GM12878 (cell line): ENCODE measurements at regions of chrX and their contacts with region 1.

Region 1: DNA sequence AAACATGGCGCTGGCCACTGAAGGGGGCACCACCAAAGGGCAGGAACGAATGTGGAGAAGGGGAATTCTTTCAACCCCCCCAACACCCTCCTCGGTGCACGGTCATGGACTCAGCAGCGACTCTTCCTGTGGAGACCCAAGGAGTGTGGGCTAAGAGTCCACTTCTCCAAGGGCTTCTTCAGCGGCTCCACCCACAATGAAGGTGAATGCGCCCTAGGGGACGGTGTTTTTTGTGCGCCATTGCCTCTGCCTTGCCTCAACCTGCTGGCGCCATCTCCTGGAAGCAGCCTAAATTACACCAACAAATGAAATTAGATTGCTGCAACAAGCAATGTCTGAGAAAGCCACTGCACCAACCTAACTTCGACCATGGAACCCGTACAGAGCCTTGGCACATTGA is 169.2 kb upstream of the MAGEB18 start:
- DNase-seq: no peak
- ATAC-seq: peak; percentile 58
- H3K4me3 ChIP-seq: no peak overlapping the region
- H3K27ac ChIP-seq: no peak overlapping the region
- H3K4me1 ChIP-seq: no peaks in the 10 kb centered on the region
- H3K27me3 ChIP-seq: no peaks in the 10 kb centered on the region
- CTCF ChIP-seq: peak; percentile 41 to 47 (median 42); a peak in 5 of 6 replicates
- EP300 ChIP-seq: no peak
- POLR2A ChIP-seq: no peak
- RAD21 ChIP-seq: peak; percentile 55

Region 2: GRCh38 chrX:25523574-25524540 is 445.1 kb before region 1 on chrX:
- CTCF ChIA-PET with region 1: no interaction called
- POLR2A ChIA-PET with region 1: no interaction called
- RAD21 ChIA-PET with region 1: no interaction called
- SMC1A ChIA-PET with region 1: no interaction called
- in situ Hi-C with region 1: no loop called
- intact Hi-C with region 1: loop called (anchors 1 kb)
- DNase-seq: no peak
- ATAC-seq: no peak
- H3K4me3 ChIP-seq: no peak overlapping the region
- H3K27ac ChIP-seq: no peak overlapping the region
- H3K4me1 ChIP-seq: no peaks in the 10 kb centered on the region
- H3K27me3 ChIP-seq: no peaks in the 10 kb centered on the region
- CTCF ChIP-seq: peak; percentile 8 to 30 (median 18); a peak in 3 of 6 replicates
- EP300 ChIP-seq: no peak
- POLR2A ChIP-seq: no peak
- RAD21 ChIP-seq: peak; percentile 45; the same call in 1 of the 2 replicates

Region 3: GRCh38 chrX:25721564-25721963 is 247.4 kb before region 1 on chrX:
- CTCF ChIA-PET with region 1: no interaction called
- POLR2A ChIA-PET with region 1: no interaction called
- RAD21 ChIA-PET with region 1: no interaction called
- SMC1A ChIA-PET with region 1: no interaction called
- in situ Hi-C with region 1: no loop called
- intact Hi-C with region 1: loop called (anchors 5 kb)
- DNase-seq: no peak
- ATAC-seq: no peak
- H3K4me3 ChIP-seq: no peak overlapping the region
- H3K27ac ChIP-seq: no peak overlapping the region
- H3K4me1 ChIP-seq: no peaks in the 10 kb centered on the region
- H3K27me3 ChIP-seq: no peaks in the 10 kb centered on the region
- CTCF ChIP-seq: peak in 2 of 3 experiments; percentile 29 to 30; a peak in 3 of 6 replicates
- EP300 ChIP-seq: no peak
- POLR2A ChIP-seq: no peak
- RAD21 ChIP-seq: peak; percentile 45